Activated CD4-positive, alpha-beta T cell treated with anti-CD3 and anti-CD28 coated beads for 36 hours (primary cell): ENCODE measurements at regions of chr20 and their contacts with region 1.

Region 1: DNA sequence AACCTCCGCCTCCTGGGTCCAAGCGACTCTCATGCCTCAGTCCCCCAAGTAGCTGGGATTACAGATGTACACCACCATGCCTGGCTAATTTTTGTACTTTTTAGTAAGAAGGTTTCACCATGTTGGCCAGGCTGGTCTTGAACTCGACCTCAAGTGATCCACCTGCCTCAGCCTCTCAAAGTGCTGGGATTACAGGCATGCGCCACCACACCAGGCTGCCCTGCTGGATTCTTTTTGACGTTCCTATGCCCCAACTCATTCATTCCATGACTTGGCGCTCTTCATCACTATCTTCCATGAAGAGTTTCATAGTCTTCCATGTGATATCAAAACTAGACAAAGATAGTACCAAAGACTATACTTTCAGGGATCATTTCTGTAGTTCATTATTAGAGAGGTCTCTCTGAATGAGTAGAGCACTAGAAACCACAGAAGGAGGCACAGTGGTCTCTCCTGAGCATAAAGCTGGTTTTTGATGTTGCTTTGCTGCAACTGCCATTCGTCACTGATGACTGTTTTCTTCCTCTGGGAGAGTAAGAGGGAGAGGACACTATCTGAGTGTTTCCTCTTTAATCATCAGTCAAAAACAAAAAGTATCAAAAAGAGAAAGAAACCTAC is 23.5 kb downstream of the DNAAF9 start:
- DNase-seq: peak; percentile 71
- ATAC-seq: peak; percentile 96
- H3K4me3 Mint-ChIP-seq: peak overlapping the region; percentile 27
- H3K27ac Mint-ChIP-seq: peak overlapping the region; percentile 80
- H3K4me1 Mint-ChIP-seq: peaks cover 21% of the 10 kb centered on the region
- H3K27me3 Mint-ChIP-seq: no peaks in the 10 kb centered on the region

Region 2: GRCh38 chr20:2984956-2985661 is 398.9 kb before region 1 on chr20:
- CTCF ChIA-PET with region 1: no interaction called
- POLR2A ChIA-PET with region 1: no interaction called
- intact Hi-C with region 1: loop called in 1 of 2 experiments (anchors 1 kb)
- DNase-seq: peak; percentile 71
- ATAC-seq: no peak
- H3K4me3 Mint-ChIP-seq: no peak overlapping the region
- H3K27ac Mint-ChIP-seq: no peak overlapping the region
- H3K4me1 Mint-ChIP-seq: peaks cover 25% of the 10 kb centered on the region
- H3K27me3 Mint-ChIP-seq: no peaks in the 10 kb centered on the region

Region 3: DNA sequence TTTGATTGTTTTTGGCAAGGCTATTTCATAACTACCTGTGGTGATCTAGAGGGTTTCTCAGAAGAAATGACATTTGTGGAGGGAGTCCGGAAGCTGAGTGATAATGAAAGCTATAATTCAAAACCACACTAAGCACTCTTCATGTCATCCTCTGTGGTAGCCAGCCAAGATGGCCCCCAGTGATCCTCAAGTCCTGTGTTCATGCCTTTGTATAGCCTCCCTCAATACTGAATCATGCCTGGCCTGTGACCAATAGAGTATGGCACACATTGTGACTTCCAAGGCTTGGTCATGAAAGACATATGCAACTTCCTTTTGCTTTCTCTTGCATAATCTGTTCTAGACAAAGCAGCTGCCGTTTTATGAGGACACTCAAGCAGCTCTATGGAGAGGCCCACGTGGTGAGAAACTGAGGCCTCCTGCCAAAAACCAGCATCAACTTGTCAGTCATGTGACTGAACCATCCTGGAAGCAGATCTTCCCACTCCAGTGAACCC is 36.3 kb after region 1 on chr20:
- CTCF ChIA-PET with region 1: no interaction called
- POLR2A ChIA-PET with region 1: interaction called, 5 read pairs
- intact Hi-C with region 1: loop called (anchors 1 kb)
- DNase-seq: peak; percentile 78
- ATAC-seq: peak; percentile 100
- H3K4me3 Mint-ChIP-seq: no peak overlapping the region
- H3K27ac Mint-ChIP-seq: peak overlapping the region; percentile 32
- H3K4me1 Mint-ChIP-seq: peaks cover 8% of the 10 kb centered on the region
- H3K27me3 Mint-ChIP-seq: no peaks in the 10 kb centered on the region

Region 4: GRCh38 chr20:3509064-3509463 is 125.1 kb after region 1 on chr20:
- CTCF ChIA-PET with region 1: no interaction called
- POLR2A ChIA-PET with region 1: no interaction called
- intact Hi-C with region 1: loop called in 1 of 2 experiments (anchors 1 kb)
- DNase-seq: no peak
- ATAC-seq: peak; percentile 64
- H3K4me3 Mint-ChIP-seq: no peak overlapping the region
- H3K27ac Mint-ChIP-seq: no peak overlapping the region
- H3K4me1 Mint-ChIP-seq: peaks cover 11% of the 10 kb centered on the region
- H3K27me3 Mint-ChIP-seq: no peaks in the 10 kb centered on the region

Region 5: GRCh38 chr20:3797592-3798372 is 413.8 kb after region 1 on chr20:
- CTCF ChIA-PET with region 1: no interaction called
- POLR2A ChIA-PET with region 1: no interaction called
- intact Hi-C with region 1: no loop called
- DNase-seq: peak; percentile 66
- ATAC-seq: peak; percentile 40
- H3K4me3 Mint-ChIP-seq: peak overlapping the region; percentile 93
- H3K27ac Mint-ChIP-seq: peak overlapping the region; percentile 97
- H3K4me1 Mint-ChIP-seq: peaks cover 56% of the 10 kb centered on the region
- H3K27me3 Mint-ChIP-seq: no peaks in the 10 kb centered on the region

Region 6: GRCh38 chr20:3911956-3912355 is 528.0 kb after region 1 on chr20:
- CTCF ChIA-PET with region 1: no interaction called
- POLR2A ChIA-PET with region 1: no interaction called
- intact Hi-C with region 1: loop called in 1 of 2 experiments (anchors 1 kb)
- DNase-seq: no peak
- ATAC-seq: no peak
- H3K4me3 Mint-ChIP-seq: no peak overlapping the region
- H3K27ac Mint-ChIP-seq: peak overlapping the region; percentile 2
- H3K4me1 Mint-ChIP-seq: peaks cover 45% of the 10 kb centered on the region
- H3K27me3 Mint-ChIP-seq: no peaks in the 10 kb centered on the region